HepG2 (cell line): ENCODE measurements at regions of chr3 and their contacts with region 1.

Region 1: DNA sequence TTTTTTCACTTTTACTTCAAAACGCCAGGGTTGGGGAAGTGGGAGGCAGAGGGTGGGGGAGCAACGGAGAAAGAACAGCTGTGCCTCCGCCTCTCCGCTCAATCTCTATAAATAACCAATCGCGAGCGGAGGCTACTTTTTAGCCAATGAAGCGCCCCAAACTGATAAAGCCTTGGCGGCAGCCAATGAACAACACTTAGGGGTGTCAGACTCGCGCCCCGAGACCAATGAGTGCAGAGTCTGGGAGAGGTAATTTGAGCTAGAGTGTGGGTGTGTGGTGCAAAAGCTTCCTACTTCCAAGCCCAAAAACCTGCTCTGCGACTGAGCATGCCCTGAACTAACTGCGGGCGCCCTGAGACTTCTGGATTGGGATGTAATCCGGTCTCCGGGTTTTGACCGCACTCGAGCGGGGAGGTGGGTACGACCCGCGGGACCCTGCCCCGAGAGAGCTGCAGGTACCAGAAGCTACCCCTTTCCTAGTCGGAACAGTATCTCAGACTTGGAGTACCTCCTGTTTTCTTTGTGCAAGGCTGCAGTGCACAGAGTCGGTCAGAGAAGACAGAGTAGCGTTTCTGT is 800 bp upstream of the RAP2B start:
- DNase-seq: peak; percentile 99
- ATAC-seq: peak; percentile 89
- H3K4me3 ChIP-seq: peak overlapping the region; percentile 85 to 94 (median 94)
- H3K27ac ChIP-seq: peak overlapping the region; percentile 83
- H3K4me1 ChIP-seq: peaks cover 51% of the 10 kb centered on the region
- H3K27me3 ChIP-seq: no peaks in the 10 kb centered on the region; a peak in 1 of 5 replicates
- CTCF ChIP-seq: no peak
- EP300 ChIP-seq: no peak
- POLR2A ChIP-seq: peak in 1 of 2 experiments; percentile 34; a peak in 1 of 4 replicates
- RAD21 ChIP-seq: no peak

Region 2: DNA sequence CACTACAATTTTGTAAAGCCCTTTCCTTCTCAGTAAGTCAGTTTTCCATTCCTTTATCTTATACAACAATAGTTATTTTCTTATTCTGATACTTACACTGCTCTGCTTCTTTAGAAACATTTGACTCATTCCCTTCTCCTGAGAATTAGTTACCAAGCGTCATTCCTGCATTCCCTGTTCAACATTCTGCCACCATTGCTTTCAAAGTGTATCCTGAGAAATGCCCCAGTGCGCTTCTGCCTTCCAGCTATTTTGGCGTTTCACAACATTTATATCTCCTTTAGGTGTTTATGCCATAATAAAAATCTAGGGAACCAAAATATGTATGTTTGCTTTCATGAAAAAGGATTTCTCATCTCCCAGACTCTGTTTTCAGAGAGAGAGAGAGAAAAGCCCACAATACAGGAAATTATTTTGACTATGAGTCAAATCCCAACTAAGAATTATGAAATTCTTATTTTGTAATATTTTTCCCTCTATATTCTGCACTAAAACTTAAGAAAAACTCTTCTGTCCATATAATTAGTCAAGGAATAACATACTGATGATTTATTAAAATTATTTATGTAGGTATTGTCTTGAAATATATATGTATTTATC is 117.4 kb before region 1 on chr3:
- CTCF ChIA-PET with region 1: no interaction called
- POLR2A ChIA-PET with region 1: no interaction called
- in situ Hi-C with region 1: loop called (anchors 5 kb)
- intact Hi-C with region 1: loop called (anchors 1 kb)
- DNase-seq: no peak
- ATAC-seq: no peak
- H3K4me3 ChIP-seq: no peak overlapping the region
- H3K27ac ChIP-seq: no peak overlapping the region
- H3K4me1 ChIP-seq: peaks cover 2% of the 10 kb centered on the region
- H3K27me3 ChIP-seq: no peaks in the 10 kb centered on the region
- CTCF ChIP-seq: no peak
- EP300 ChIP-seq: no peak
- POLR2A ChIP-seq: no peak
- RAD21 ChIP-seq: no peak

Region 3: GRCh38 chr3:153138276-153139210 is 22.7 kb before region 1 on chr3:
- CTCF ChIA-PET with region 1: no interaction called
- POLR2A ChIA-PET with region 1: interaction called, 15 read pairs
- in situ Hi-C with region 1: no loop called
- intact Hi-C with region 1: loop called (anchors 1 kb)
- DNase-seq: peak; percentile 97
- ATAC-seq: peak; percentile 84
- H3K4me3 ChIP-seq: no peak overlapping the region
- H3K27ac ChIP-seq: peak overlapping the region; percentile 81
- H3K4me1 ChIP-seq: peaks cover 58% of the 10 kb centered on the region
- H3K27me3 ChIP-seq: no peaks in the 10 kb centered on the region
- CTCF ChIP-seq: no peak
- EP300 ChIP-seq: peak in 1 of 2 experiments; percentile 93; a peak in 2 of 4 replicates
- POLR2A ChIP-seq: no peak
- RAD21 ChIP-seq: no peak

Region 4: DNA sequence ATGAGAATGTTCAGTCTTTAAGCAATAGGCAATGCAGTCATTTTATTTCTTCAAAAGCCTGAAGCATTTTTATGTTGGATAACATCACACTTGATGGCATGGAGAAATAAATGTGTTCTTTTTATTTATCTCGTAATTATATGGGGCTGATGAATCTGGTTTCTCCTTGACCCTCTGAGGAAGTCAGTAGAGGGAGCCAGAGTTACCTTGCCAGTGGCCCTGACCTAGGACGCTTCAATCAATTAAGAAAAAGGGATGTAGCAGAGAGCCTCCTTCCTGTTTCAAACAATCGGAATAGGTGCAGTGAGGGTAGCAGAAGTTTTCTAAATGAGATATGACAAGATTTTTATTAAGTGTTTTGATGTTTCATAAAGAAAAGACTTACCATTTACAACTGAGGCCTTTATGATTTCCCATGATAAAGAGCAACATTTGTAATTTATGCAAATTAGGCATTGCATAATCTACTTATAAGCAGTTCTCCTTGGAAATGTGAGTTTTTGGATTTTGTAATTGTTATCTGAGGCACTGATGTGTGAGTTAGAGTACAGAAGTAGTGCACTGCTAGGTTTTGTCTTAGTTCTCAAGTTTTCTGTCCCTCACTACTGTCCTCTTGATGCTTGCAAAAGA is 129.9 kb after region 1 on chr3:
- CTCF ChIA-PET with region 1: no interaction called
- POLR2A ChIA-PET with region 1: no interaction called
- in situ Hi-C with region 1: no loop called
- intact Hi-C with region 1: loop called (anchors 2 kb)
- DNase-seq: peak; percentile 12
- ATAC-seq: peak; percentile 65; the same call in 2 of the 3 replicates
- H3K4me3 ChIP-seq: no peak overlapping the region
- H3K27ac ChIP-seq: no peak overlapping the region
- H3K4me1 ChIP-seq: no peaks in the 10 kb centered on the region
- H3K27me3 ChIP-seq: no peaks in the 10 kb centered on the region
- CTCF ChIP-seq: peak; percentile 42; the same call in 1 of the 2 replicates
- EP300 ChIP-seq: no peak
- POLR2A ChIP-seq: no peak
- RAD21 ChIP-seq: no peak

Region 5: GRCh38 chr3:153768561-153769469 is 607.6 kb after region 1 on chr3:
- CTCF ChIA-PET with region 1: no interaction called
- POLR2A ChIA-PET with region 1: no interaction called
- in situ Hi-C with region 1: no loop called
- intact Hi-C with region 1: loop called (anchors 2 kb)
- DNase-seq: peak; percentile 30
- ATAC-seq: peak; percentile 98
- H3K4me3 ChIP-seq: no peak overlapping the region
- H3K27ac ChIP-seq: no peak overlapping the region
- H3K4me1 ChIP-seq: no peaks in the 10 kb centered on the region
- H3K27me3 ChIP-seq: no peaks in the 10 kb centered on the region
- CTCF ChIP-seq: peak; percentile 83
- EP300 ChIP-seq: no peak
- POLR2A ChIP-seq: no peak
- RAD21 ChIP-seq: peak; percentile 48